Breast epithelium (tissue), 4 donors: ENCODE measurements at regions of chr7 and their contacts with region 1.

Region 1: GRCh38 chr7:100081535-100082102 is at the start of gene ZNF3:
- DNase-seq: peak; percentile 98 to 99
- H3K4me3 ChIP-seq: peak within 1 kb of the TSS; percentile 75 to 99 (median 75)
- H3K27ac ChIP-seq: peak within 1 kb of the TSS; percentile 83 to 89
- H3K4me1 ChIP-seq: peaks cover 0 to 7% of the 10 kb centered on the region in 2 donors
- H3K27me3 ChIP-seq: no peaks in the 10 kb centered on the region
- CTCF ChIP-seq: peak; percentile 84 to 98 (median 95)
- POLR2A ChIP-seq: peak; percentile 54
- total RNA-seq, gene ZNF3: 19.4 to 43.6 (median 31.5) TPM

Region 2: DNA sequence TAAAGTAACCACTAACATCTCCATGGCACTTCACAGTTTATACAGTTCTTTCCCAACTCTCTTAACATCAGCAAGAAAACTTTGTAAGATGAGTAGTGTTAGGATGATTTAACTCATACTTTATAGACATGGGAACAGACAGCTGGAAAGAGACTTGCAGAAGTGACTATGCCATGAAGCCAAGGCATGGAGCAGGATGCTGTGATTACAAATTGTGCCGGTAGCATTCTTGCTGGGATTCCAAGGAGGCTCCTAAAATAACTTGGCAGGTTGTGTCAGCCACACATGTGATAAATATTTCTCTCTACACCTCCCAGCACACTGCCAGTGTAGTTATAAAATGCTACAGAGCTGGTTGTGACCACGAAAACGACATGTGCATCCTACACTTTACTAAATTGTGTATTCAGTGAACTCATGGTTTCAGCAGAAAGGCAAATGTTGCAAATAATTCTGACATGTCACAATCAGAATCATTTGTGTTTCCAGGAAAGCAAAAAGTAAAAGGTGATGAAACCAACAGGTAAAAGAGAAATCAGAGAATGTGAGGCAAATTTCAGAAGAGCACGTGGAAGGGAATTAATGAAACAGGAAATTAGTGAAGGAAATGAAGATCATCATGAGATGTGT is 292.1 kb before region 1 on chr7:
- intact Hi-C with region 1: no loop called
- DNase-seq: peak in 1 of 2 donors; percentile 21
- H3K4me3 ChIP-seq: no peak overlapping the region
- H3K27ac ChIP-seq: no peak overlapping the region
- H3K4me1 ChIP-seq: no peaks in the 10 kb centered on the region
- H3K27me3 ChIP-seq: no peaks in the 10 kb centered on the region
- CTCF ChIP-seq: no peak
- POLR2A ChIP-seq: no peak

Region 3: GRCh38 chr7:99928994-99929729 is 152.5 kb before region 1 on chr7 and contains the start of gene GJC3:
- intact Hi-C with region 1: no loop called
- DNase-seq: peak; percentile 62 to 66
- H3K4me3 ChIP-seq: peak within 1 kb of the TSS in 2 of 3 donors; percentile 39 to 61
- H3K27ac ChIP-seq: peak within 1 kb of the TSS; percentile 50 to 59
- H3K4me1 ChIP-seq: peaks cover 0 to 7% of the 10 kb centered on the region in 2 donors
- H3K27me3 ChIP-seq: no peaks in the 10 kb centered on the region
- CTCF ChIP-seq: peak; percentile 32 to 67 (median 36)
- POLR2A ChIP-seq: no peak
- total RNA-seq, gene GJC3: 0.80 to 25.6 (median 6.6) TPM

Region 4: GRCh38 chr7:100015232-100016209 is 66.1 kb before region 1 on chr7 and contains the start of gene ZKSCAN1:
- intact Hi-C with region 1: loop called (anchors 10 kb)
- DNase-seq: peak; percentile 84 to 87
- H3K4me3 ChIP-seq: peak within 1 kb of the TSS; percentile 93 to 100 (median 100)
- H3K27ac ChIP-seq: peak within 1 kb of the TSS; percentile 99 to 100
- H3K4me1 ChIP-seq: peaks cover 4 to 10% of the 10 kb centered on the region in 2 donors
- H3K27me3 ChIP-seq: no peaks in the 10 kb centered on the region
- CTCF ChIP-seq: no peak
- POLR2A ChIP-seq: peak; percentile 77
- total RNA-seq, gene ZKSCAN1: 30.6 to 65.1 (median 52.4) TPM

Region 5: DNA sequence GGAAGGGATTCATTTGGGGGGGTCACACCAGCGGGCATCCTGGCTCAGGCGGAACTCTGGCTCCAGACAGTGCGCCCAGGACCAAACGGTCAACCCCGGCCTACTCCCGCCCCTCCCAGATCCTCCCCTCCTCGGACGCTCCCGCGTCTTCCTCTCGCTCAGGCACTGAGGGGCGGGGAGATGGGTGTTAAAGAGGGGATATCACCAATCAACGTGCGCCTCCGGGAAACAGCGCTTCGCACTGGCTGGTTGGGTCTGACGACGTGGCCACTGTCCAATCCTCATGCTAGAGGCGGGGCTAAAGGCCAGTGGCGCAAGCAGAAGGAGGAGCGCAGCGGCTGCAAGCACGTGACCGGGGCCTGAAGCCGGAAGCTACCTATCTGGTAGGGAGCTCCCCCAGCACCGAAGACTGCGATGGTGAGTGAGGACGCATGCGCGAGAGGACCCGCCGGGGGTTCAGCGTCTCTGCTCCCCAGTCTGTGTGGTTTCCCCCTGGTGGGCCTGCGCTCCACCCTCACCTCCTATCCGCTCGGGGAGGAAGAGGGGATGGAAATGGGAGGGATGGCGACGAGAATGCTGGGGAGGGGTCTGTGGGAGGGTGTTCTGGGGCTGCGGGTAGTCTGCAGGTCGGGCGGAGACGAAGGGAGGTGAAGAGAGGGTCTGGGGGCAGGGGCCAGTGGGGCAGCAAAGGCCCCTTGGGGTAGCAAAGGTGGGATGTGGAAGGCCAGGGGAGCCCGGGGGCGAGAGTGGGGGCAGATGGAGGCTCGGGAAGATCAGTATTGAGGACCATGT is 67.1 kb after region 1 on chr7 and contains the start of gene LAMTOR4:
- intact Hi-C with region 1: loop called (anchors 10 kb)
- DNase-seq: peak; percentile 99
- H3K4me3 ChIP-seq: peak within 1 kb of the TSS; percentile 86 to 94 (median 86)
- H3K27ac ChIP-seq: peak within 1 kb of the TSS; percentile 91 to 93
- H3K4me1 ChIP-seq: peaks cover 5 to 7% of the 10 kb centered on the region in 2 donors
- H3K27me3 ChIP-seq: no peaks in the 10 kb centered on the region
- CTCF ChIP-seq: no peak
- POLR2A ChIP-seq: peak; percentile 64
- total RNA-seq, gene LAMTOR4: 154 to 285 (median 207) TPM